Psoas muscle (tissue), 8 donors: ENCODE measurements at regions of chr22 and their contacts with region 1.

Region 1: DNA sequence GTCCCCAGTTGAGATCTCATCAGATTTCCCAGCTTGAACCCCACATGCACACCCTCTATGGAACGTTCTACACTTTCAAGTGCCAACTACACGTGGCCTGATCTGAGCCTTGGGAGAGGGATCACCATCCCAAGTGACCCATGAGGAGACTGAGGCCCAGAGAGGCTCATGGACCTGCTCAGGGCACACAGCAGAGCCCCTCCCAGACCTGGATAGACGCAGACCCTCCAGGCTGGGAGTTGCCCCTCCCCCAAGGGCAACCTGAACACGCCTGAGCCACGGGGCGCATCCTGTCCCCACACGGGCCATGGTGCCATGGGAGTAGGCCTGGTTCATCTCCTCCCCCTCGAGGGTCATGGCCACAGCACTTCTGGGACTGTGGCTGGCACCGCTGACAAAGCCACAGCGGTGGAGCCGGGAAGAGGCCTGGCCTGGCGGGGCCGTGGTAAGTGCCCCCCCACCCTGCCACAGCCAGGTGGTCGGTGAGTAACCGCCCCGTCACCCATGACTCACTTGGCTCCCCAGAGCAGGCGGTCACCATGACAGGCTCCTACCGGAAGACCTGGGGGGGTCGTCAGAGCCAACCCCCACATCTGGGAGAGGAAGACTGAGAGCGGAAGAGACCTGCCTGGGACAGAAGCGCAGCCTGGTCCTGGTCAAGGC is 8.1 kb downstream of the WNT7B start:
- DNase-seq: no peak
- ATAC-seq: peak in 1 of 4 donors; percentile 5
- H3K4me3 ChIP-seq: no peak overlapping the region
- H3K27ac ChIP-seq: no peak overlapping the region
- H3K4me1 ChIP-seq: peaks cover 8% of the 10 kb centered on the region
- H3K27me3 ChIP-seq: peaks cover 0 to 84% (median 21%) of the 10 kb centered on the region in 3 donors
- CTCF ChIP-seq: no peak

Region 2: GRCh38 chr22:45577746-45578523 is 390.9 kb before region 1 on chr22:
- intact Hi-C with region 1: loop called in 1 of 2 experiments (anchors 2 kb)
- DNase-seq: peak; percentile 81 to 91
- ATAC-seq: peak; percentile 86 to 92 (median 88)
- H3K4me3 ChIP-seq: no peak overlapping the region
- H3K27ac ChIP-seq: no peak overlapping the region
- H3K4me1 ChIP-seq: no peaks in the 10 kb centered on the region
- H3K27me3 ChIP-seq: peaks cover 0 to 6% (median 0%) of the 10 kb centered on the region in 3 donors
- CTCF ChIP-seq: peak; percentile 92

Region 3: DNA sequence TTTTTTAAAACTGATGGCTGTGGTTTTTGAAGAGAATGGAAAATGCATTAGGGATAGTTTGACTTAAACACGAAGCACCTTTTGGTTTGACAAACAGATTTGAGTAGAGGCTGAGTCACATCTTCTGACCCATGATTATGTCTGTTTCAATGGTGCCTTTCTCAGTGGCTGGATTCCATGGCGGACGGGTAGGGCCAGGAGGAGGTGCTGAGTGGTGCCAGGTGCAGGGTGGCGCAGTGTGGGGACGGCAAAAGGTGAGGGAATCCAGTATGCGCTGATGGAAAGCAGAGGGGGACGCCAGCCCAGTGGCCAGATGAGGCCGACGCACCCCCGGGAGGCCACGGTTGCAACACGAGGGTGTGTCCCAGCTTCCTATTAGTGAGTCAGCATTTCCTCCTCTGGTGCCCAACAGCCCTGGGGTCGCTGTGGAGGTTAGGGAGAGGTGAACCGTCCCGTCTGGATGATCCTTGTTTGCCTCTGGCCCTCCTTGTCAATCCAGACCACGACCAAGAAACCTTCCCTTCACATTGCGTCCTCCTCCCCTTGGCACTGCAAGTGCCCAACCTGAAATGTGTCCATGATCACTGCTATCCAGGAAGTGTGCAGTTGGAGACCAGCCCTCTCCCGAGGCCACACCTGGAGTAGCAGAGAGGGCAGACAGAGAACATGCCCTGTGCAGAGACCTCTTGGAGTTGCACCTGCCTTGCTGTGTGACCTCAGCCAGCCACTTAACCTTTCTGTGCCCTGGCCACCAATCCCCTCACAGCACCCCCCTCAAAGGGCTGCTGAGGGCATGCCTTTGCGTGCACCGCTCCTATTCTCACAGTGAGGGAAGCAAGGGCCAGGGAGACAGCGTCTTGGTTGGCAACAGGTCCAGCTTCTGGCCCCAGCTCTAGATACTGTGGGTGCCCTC is 329.8 kb before region 1 on chr22:
- intact Hi-C with region 1: loop called in 1 of 2 experiments (anchors 5 kb)
- DNase-seq: peak; percentile 74 to 85
- ATAC-seq: peak; percentile 17 to 71 (median 40)
- H3K4me3 ChIP-seq: no peak overlapping the region
- H3K27ac ChIP-seq: no peak overlapping the region
- H3K4me1 ChIP-seq: no peaks in the 10 kb centered on the region
- H3K27me3 ChIP-seq: peaks cover 0 to 4% (median 0%) of the 10 kb centered on the region in 3 donors
- CTCF ChIP-seq: no peak

Region 4: DNA sequence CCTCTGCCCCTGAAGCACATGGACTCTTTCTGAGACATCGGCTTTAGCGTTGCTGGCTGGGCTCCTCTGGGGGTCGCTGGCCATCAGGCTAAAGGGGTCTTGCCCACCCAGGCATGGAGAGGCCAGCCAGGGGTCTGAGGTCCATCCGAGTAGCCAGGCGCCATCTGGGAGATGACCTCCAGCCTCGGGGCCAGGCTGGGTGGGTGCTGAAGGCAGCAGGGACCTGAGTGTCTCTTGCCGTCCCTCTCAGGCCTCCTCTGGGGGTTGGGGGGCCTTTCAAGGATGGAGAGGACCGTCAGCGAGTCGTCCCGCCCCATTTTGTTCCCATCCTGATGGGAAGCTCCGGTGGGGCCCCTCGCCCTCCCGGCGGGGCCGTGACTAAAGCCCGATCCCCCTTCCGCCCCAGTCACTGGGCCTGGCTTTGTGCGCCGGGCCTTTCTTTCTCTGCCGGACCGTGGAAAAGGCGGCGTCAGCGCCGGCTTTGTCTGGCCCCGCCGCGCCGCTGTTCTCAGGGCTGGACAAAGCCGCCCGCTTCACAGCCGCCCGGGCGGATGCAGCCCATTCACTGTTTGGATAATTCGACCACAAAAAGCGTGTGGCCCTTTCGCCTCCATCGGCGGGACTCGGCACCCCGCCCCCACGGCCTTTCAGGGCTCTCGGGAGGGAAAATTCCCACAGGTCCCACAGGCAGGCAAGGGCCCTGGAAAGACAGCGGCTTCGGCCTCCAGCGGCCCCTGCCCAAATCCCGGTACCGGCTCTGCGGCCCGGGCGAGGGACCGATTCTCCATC is 79.4 kb before region 1 on chr22:
- intact Hi-C with region 1: loop called in 1 of 2 experiments (anchors 5 kb)
- DNase-seq: peak; percentile 12 to 42
- ATAC-seq: no peak
- H3K4me3 ChIP-seq: no peak overlapping the region
- H3K27ac ChIP-seq: no peak overlapping the region
- H3K4me1 ChIP-seq: no peaks in the 10 kb centered on the region
- H3K27me3 ChIP-seq: peaks cover 0 to 70% (median 11%) of the 10 kb centered on the region in 3 donors
- CTCF ChIP-seq: no peak

Region 5: DNA sequence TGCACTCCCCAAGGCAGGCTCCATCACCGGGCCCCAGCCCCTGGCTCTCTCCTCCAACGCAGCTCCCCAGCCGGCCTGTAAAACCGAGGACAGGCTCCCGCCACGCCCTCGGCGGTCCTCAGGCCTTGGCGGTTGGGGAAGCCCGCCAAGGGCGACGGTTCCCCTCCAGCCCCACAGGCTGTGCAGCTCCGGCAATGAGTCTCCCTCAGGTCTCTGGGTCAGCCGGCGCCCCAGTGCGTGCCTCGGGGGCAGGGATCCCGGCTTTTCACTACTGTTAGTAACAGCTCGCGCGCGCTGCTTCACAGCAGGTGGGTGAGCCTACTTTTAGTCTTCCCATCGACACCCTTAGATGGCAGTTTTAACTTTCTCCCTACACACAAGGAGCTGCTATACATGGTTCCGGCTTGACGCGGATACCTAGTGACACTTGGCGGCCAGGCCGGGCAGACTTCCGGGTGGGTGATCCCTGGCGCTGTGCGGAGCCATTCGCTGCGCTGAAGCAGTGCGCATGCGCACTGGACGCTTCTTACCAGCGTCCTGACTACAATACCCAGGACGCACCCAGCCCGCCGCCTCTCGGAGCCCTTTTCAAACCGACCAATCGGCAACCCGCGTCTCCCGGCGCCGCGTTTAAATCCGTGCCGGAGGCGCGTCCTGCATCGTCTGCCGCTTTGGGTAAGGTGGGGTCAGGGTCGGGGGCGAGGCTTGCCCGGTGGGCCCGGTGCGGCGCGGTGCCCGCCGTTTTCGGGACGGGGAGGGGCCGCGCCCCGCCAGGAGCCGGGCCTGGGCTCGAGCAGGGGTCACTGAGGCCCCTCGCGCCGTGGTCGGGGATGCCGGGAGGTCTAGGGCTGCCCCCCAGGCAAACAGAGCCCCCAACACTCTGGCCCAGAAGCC is 327.6 kb after region 1 on chr22 and contains the start of gene GTSE1:
- intact Hi-C with region 1: no loop called
- DNase-seq: peak; percentile 98 to 99
- ATAC-seq: peak; percentile 96 to 99 (median 98)
- H3K4me3 ChIP-seq: peak within 1 kb of the TSS; percentile 74
- H3K27ac ChIP-seq: peak within 1 kb of the TSS; percentile 89
- H3K4me1 ChIP-seq: peaks cover 7% of the 10 kb centered on the region
- H3K27me3 ChIP-seq: no peaks in the 10 kb centered on the region
- CTCF ChIP-seq: peak; percentile 20
- total RNA-seq, gene GTSE1: 0.15 to 0.47 (median 0.29) TPM in 3 of 4 donors, not detected in the other